Calu3 (cell line): ENCODE measurements at regions of chr4 and their contacts with region 1.

Region 1: DNA sequence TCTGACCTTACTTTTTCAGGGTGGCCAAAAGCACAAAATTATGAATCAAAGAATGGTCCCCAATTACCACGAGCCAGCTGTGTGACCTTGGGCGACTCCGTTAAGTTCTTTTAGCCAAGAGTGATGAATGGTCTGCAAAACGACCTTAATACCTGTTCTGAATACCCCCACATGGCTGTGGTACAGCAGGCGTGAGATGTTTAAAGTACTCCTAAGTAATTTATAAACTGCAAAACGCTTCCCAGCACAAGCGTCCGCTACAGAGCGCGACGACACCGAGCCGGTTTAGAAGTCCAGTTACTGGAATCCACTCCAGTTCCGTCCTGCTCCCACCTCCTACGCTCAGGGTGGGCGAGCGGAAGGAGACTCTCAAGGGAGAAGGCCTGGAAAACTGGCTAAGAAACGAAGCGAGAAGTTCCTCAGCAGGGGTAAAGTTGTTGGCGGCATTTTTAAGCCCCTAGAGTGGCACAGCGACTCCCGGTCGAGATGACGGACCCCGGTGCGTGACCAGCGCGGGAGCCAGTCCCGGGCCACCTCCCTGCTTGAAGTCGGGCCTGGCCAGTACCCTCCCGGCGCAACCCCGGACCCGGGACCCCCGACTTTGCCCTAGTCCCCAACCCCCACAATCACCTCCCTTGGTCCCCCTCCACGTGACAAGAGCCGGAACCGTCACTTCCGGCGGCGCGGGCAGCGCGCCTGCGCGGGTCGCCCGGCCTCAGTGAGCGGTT is 683 bp upstream of the BMP2K start:
- DNase-seq: peak; percentile 80
- H3K4me3 Mint-ChIP-seq: no peak overlapping the region
- H3K27ac Mint-ChIP-seq: peak overlapping the region; percentile 90
- H3K4me1 Mint-ChIP-seq: no peaks in the 10 kb centered on the region
- H3K27me3 Mint-ChIP-seq: no peaks in the 10 kb centered on the region
- CTCF ChIP-seq: no peak

Region 2: DNA sequence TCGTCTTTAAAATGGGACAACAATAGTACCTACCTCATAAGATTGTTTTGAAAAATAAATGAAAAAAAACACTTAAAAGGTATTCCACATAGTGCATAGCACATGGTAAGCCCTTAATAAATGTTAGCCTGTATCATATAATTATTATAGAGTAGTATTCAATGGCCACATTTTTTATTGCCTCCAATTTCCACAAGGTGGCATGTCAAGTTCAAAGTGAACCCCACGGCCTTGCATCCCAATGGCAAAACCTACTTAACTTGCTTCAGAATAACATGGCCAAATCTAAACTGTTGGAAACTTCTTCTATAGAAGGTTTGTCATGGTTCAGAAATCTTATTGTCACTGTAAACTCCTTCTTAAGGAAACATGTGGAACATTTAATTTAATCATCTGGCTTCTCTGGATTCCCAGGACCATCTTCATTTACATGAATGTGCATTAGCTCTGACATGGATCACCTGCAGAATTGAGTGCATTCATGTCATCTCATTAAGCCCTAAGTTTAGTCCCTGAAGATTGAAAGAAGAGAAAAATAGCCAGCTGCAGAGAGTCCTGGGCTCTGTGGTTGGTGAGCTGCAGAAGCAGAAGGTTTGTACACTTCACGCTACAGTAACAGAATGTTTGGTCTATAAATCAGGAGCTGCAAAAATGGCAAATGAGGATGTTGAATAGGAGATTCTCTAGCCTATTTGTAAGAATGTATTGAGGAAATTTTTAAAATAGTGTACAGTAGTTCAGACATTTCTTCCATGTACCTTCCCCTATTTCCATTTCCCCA is 162.9 kb before region 1 on chr4:
- CTCF ChIA-PET with region 1: no interaction called
- intact Hi-C with region 1: loop called (anchors 5 kb)
- DNase-seq: peak; percentile 17
- H3K4me3 Mint-ChIP-seq: no peak overlapping the region
- H3K27ac Mint-ChIP-seq: no peak overlapping the region
- H3K4me1 Mint-ChIP-seq: peaks cover 13% of the 10 kb centered on the region
- H3K27me3 Mint-ChIP-seq: no peaks in the 10 kb centered on the region
- CTCF ChIP-seq: peak; percentile 15

Region 3: DNA sequence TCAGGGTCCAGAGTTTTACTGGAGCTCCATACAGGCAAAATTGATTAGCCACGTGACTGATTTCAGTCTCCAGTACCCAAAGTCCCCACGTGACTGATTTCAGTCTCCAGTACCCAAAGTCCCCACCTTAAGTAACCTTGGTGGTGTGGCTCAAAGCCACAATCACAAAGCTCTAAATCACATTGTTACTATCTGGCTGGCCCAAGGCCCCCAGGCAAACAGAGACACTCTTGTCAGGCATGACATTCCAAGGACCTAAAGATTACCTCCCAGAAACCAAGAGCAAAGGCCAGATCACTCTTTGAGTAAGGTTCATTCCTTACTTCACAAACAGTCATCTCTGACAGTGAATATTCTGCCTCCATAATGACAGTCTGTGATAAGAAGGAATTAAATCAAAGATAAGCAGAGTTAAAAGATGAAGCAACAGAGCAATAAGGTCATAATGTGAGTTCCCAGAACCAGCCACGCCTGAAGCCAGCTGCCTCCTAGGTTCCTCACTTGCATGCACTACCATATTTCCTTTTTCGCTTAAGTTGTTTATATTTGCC is 145.4 kb before region 1 on chr4:
- CTCF ChIA-PET with region 1: no interaction called
- intact Hi-C with region 1: loop called (anchors 5 kb)
- DNase-seq: no peak
- H3K4me3 Mint-ChIP-seq: no peak overlapping the region
- H3K27ac Mint-ChIP-seq: no peak overlapping the region
- H3K4me1 Mint-ChIP-seq: peaks cover 34% of the 10 kb centered on the region
- H3K27me3 Mint-ChIP-seq: no peaks in the 10 kb centered on the region
- CTCF ChIP-seq: no peak

Region 4: GRCh38 chr4:78845472-78845871 is 70.0 kb after region 1 on chr4:
- CTCF ChIA-PET with region 1: no interaction called
- intact Hi-C with region 1: no loop called
- DNase-seq: no peak
- H3K4me3 Mint-ChIP-seq: no peak overlapping the region
- H3K27ac Mint-ChIP-seq: no peak overlapping the region
- H3K4me1 Mint-ChIP-seq: no peaks in the 10 kb centered on the region
- H3K27me3 Mint-ChIP-seq: no peaks in the 10 kb centered on the region
- CTCF ChIP-seq: no peak

Region 5: DNA sequence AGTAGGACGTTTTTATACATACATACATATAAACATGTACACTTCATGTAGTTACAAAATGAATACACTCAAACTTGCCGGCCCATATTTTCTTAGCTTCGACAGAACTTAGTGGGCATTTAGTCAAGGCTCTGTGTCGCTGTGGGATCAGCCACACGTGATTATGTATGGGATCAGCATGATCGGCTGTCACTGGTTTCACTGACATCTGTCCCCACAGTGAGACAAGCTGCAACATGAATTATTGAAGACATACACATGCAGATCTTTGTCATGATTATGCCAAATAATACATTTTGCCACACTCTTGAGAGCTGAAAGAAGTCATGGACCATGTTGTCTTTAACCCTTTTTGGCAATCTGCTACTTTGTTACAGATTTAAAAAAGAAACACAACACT is 588.6 kb after region 1 on chr4:
- CTCF ChIA-PET with region 1: no interaction called
- intact Hi-C with region 1: no loop called
- DNase-seq: no peak
- H3K4me3 Mint-ChIP-seq: no peak overlapping the region
- H3K27ac Mint-ChIP-seq: no peak overlapping the region
- H3K4me1 Mint-ChIP-seq: no peaks in the 10 kb centered on the region
- H3K27me3 Mint-ChIP-seq: no peaks in the 10 kb centered on the region
- CTCF ChIP-seq: no peak